A549 (cell line): ENCODE measurements at regions of chr17 and their contacts with region 1.

Region 1: GRCh38 chr17:47229535-47230443 is 20.6 kb downstream of the MYL4 start:
- DNase-seq: peak; percentile 92 to 96
- ATAC-seq: peak; percentile 94 to 95
- H3K4me3 ChIP-seq: peak overlapping the region; percentile 15; the same call in 1 of the 3 replicates
- H3K27ac ChIP-seq: peak overlapping the region; percentile 15 to 69; a peak in 3 of 6 replicates
- H3K4me1 ChIP-seq: peaks cover 18% of the 10 kb centered on the region
- CTCF ChIP-seq: peak; percentile 98
- EP300 ChIP-seq: no peak
- POLR2A ChIP-seq: no peak
- RAD21 ChIP-seq: peak; percentile 99

Region 2: DNA sequence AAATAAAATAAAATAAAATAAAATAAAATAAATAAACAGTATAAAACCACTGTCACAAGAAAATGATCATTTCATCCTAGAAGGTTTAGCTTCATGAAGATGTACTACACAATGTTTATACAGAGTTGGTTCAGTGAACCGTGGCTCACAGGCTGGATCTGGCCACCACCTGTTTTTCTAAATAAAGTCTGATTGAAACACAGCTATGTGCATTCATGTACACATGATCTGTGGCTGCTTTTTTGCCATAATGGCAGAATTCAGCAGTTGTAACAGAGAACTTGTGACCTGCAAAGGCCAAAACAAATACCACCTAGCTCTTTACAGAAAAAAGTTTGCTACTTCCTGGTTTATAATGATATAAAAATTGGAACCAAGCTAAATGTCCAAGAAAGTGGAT is 238.2 kb before region 1 on chr17:
- CTCF ChIA-PET with region 1: no interaction called
- POLR2A ChIA-PET with region 1: no interaction called
- DNase-seq: no peak
- ATAC-seq: no peak
- H3K4me3 ChIP-seq: no peak overlapping the region
- H3K27ac ChIP-seq: no peak overlapping the region
- H3K4me1 ChIP-seq: peaks cover 3% of the 10 kb centered on the region; the same call in 1 of the 3 replicates
- CTCF ChIP-seq: no peak
- EP300 ChIP-seq: no peak
- POLR2A ChIP-seq: no peak
- RAD21 ChIP-seq: no peak

Region 3: GRCh38 chr17:47072886-47073285 is 156.9 kb before region 1 on chr17:
- CTCF ChIA-PET with region 1: no interaction called
- POLR2A ChIA-PET with region 1: no interaction called
- DNase-seq: no peak
- ATAC-seq: no peak
- H3K4me3 ChIP-seq: no peak overlapping the region
- H3K27ac ChIP-seq: no peak overlapping the region
- H3K4me1 ChIP-seq: peaks cover 13% of the 10 kb centered on the region; the same call in 2 of the 3 replicates
- CTCF ChIP-seq: no peak
- EP300 ChIP-seq: no peak
- POLR2A ChIP-seq: no peak
- RAD21 ChIP-seq: no peak

Region 4: GRCh38 chr17:47162013-47162622 is 67.7 kb before region 1 on chr17:
- CTCF ChIA-PET with region 1: no interaction called
- POLR2A ChIA-PET with region 1: no interaction called
- DNase-seq: no peak
- ATAC-seq: no peak
- H3K4me3 ChIP-seq: no peak overlapping the region
- H3K27ac ChIP-seq: no peak overlapping the region
- H3K4me1 ChIP-seq: no peaks in the 10 kb centered on the region
- CTCF ChIP-seq: no peak
- EP300 ChIP-seq: no peak
- POLR2A ChIP-seq: no peak
- RAD21 ChIP-seq: no peak

Region 5: GRCh38 chr17:47205419-47205963 is 24.3 kb before region 1 on chr17:
- CTCF ChIA-PET with region 1: interaction called, 15 read pairs
- POLR2A ChIA-PET with region 1: no interaction called
- DNase-seq: no peak
- ATAC-seq: no peak
- H3K4me3 ChIP-seq: no peak overlapping the region
- H3K27ac ChIP-seq: no peak overlapping the region
- H3K4me1 ChIP-seq: no peaks in the 10 kb centered on the region
- CTCF ChIP-seq: no peak
- EP300 ChIP-seq: no peak
- POLR2A ChIP-seq: no peak
- RAD21 ChIP-seq: no peak

Region 6: DNA sequence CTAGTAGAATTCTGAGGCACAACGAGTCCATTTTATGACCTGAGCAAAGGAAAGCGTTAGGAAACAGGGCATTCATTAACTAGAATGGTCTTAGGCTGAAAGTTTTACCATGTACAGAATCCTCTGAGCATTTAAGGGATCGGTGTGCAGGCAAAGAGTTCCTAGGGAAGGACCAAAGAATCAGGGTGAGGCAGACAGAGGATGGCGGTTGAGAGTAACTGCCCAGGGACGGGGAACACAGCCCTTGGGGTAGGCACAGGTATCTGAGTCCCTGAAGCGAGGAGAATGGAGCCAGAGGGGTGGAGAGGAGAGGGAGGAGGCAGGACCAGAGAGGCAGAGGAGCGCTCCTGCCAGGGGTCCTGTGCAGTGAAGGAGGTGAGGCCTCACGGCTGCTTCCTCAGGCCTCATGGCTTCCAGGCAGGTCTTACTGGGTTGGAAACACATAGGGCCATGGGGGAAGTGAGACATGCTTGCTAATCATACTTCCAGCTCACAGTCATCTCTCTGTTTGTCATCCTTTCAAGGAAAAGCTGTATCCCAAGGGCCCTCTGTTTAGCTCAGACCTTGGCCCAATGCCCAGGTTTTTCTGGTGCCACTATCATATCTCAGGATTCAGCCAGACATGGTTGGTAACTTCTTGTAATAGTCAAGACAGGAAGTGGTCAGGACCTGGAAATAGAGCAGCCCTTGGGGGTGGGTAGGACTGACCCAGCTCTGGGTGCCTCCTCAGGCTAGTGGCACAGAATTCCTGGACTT is 10.0 kb after region 1 on chr17:
- CTCF ChIA-PET with region 1: interaction called, 37 read pairs
- POLR2A ChIA-PET with region 1: no interaction called
- DNase-seq: peak; percentile 50 to 75
- ATAC-seq: peak; percentile 69 to 84
- H3K4me3 ChIP-seq: no peak overlapping the region
- H3K27ac ChIP-seq: peak overlapping the region; percentile 53 to 81
- H3K4me1 ChIP-seq: peaks cover 13% of the 10 kb centered on the region
- CTCF ChIP-seq: no peak
- EP300 ChIP-seq: no peak
- POLR2A ChIP-seq: no peak
- RAD21 ChIP-seq: no peak

Region 7: GRCh38 chr17:47253541-47254402 is 24.0 kb after region 1 on chr17 and contains the start of gene ITGB3:
- CTCF ChIA-PET with region 1: interaction called, 16 read pairs
- POLR2A ChIA-PET with region 1: no interaction called
- DNase-seq: peak; percentile 78 to 83
- ATAC-seq: peak; percentile 98 to 99
- H3K4me3 ChIP-seq: peak within 1 kb of the TSS; percentile 56
- H3K27ac ChIP-seq: peak within 1 kb of the TSS; percentile 42 to 82; a peak in 5 of 6 replicates
- H3K4me1 ChIP-seq: peaks cover 13% of the 10 kb centered on the region; the same call in 2 of the 3 replicates
- CTCF ChIP-seq: peak; percentile 63
- EP300 ChIP-seq: no peak
- POLR2A ChIP-seq: no peak
- RAD21 ChIP-seq: peak in 1 of 2 experiments; percentile 40; a peak in 3 of 5 replicates
- polyA plus RNA-seq, gene ITGB3: 0.34 and 0.90 TPM in 2 replicates

Region 8: DNA sequence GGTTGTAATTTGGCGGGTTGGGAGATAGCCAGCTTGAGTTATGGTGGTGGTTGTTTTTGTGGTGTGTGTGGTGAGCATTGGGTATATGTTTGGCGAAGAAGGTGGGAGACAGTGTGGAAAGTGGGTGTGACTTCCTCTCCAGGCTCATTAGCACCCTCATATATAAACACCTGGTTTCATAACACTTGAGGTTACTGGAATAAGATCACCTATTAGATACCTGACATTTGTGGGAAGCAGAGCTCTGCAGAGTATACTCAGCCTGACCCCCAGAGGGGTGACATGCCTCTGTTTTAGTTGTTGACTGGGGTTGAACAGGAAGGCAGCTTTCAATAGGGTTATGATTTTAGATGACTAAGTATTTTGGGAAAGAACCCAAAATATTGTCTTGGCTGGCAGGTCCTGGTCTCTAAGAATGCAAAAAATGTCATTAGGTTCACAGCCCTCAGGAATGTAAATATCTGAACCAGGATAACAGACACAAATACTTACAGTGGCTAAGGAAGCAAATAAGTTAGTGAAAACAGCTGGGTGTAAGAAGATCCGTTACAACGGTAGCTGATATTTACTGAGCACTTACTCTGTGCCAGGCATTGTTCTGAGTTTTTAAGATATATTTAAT is 75.6 kb after region 1 on chr17:
- CTCF ChIA-PET with region 1: interaction called, 204 read pairs
- POLR2A ChIA-PET with region 1: no interaction called
- DNase-seq: peak; percentile 35 to 66
- ATAC-seq: peak; percentile 58 to 89
- H3K4me3 ChIP-seq: no peak overlapping the region
- H3K27ac ChIP-seq: peak overlapping the region in 1 of 2 experiments; percentile 73; a peak in 3 of 6 replicates
- H3K4me1 ChIP-seq: peaks cover 20% of the 10 kb centered on the region
- CTCF ChIP-seq: no peak
- EP300 ChIP-seq: 0 out of 5 replicates have a peak, but pooled peaks of 1 of the 2 experiments have one; percentile 26
- POLR2A ChIP-seq: no peak
- RAD21 ChIP-seq: no peak

Region 9: DNA sequence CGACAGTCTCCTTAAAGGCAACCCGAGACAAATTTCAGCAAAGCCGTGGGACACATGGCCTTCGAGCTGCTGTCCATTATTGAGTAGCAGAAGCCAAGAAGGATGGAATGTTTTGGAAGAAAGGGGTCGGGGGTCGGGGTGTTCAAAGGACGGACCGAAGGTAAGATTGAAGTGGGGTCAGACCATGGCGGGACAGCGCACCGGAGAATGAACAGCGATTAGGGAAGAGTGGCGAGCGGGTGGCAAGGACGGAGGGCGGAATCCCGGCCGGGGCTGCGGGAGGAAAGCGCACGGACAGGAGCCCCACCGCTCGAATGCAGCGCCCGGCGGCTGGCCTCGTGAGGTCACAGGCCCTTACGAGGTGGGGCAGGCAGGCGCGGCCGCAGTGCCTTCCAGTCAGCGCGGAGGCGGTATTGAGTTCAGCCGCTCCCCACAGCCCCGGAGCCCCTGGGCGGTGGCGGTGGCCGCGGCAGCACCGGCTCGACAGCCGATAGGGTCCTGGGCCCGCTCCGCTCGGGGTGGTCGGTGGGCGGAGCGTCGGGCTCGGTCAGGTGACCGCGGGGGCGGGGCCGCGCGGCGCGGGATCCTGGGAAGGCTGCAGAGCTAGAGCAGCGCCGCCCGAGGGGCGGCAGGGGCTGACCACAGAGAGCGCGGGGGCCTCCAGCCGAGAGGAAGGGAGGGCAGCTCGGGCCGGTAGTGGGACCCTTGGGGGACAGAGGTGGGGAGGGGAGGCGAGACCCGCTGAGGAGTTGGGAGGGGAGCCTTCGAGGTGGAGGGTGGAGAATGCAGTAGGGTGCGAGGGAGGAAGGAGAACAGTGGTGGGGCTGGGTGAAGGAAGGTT is 93.8 kb after region 1 on chr17 and contains the start of gene EFCAB13:
- CTCF ChIA-PET with region 1: interaction called, 13 read pairs
- POLR2A ChIA-PET with region 1: interaction called, 4 read pairs
- DNase-seq: peak; percentile 83 to 96
- ATAC-seq: peak; percentile 95 to 97
- H3K4me3 ChIP-seq: peak within 1 kb of the TSS; percentile 80
- H3K27ac ChIP-seq: peak within 1 kb of the TSS; percentile 91 to 97
- H3K4me1 ChIP-seq: peaks cover 10% of the 10 kb centered on the region; the same call in 2 of the 3 replicates
- CTCF ChIP-seq: peak; percentile 35; the same call in 1 of the 3 replicates
- EP300 ChIP-seq: no peak
- POLR2A ChIP-seq: peak; percentile 86
- RAD21 ChIP-seq: no peak; a peak in 2 of 5 replicates
- polyA plus RNA-seq, gene EFCAB13: 4.1 and 6.0 TPM in 2 replicates